Posterior cingulate gyrus (tissue), 11 donors: ENCODE measurements at regions of chrX and their contacts with region 1.

Region 1: DNA sequence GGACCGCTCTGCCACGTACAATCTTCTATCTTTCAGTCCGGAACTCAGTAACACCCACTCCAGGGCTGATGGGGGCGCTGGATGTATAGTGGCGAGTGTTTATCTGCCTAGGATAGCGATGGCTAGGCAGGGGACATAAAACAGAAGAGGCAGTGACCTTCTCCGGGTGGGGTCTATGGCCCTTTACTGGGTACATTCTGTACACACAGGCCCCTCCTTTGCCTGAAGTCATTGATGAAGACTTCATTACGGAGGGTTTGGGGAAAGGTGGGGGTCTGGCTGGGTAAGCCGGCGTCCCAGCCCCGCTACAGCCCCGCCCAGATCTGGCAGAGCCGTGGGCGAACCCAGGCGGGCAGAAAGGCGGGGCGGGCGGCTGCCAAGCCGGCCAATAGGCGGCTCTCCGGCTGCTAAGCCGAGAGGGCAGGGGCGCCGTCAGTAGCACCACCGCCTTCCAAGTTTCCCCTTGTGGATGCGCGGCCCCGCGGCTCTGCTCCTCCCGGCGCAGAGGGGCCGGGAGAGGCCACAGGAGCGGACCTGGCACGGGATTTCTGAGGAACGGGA is at the start of gene CHST7:
- DNase-seq: peak; percentile 16 to 88 (median 40)

Region 2: GRCh38 chrX:46642145-46642544 is 68.7 kb after region 1 on chrX:
- intact Hi-C with region 1: loop called (anchors 10 kb)
- DNase-seq: no peak

Region 3: DNA sequence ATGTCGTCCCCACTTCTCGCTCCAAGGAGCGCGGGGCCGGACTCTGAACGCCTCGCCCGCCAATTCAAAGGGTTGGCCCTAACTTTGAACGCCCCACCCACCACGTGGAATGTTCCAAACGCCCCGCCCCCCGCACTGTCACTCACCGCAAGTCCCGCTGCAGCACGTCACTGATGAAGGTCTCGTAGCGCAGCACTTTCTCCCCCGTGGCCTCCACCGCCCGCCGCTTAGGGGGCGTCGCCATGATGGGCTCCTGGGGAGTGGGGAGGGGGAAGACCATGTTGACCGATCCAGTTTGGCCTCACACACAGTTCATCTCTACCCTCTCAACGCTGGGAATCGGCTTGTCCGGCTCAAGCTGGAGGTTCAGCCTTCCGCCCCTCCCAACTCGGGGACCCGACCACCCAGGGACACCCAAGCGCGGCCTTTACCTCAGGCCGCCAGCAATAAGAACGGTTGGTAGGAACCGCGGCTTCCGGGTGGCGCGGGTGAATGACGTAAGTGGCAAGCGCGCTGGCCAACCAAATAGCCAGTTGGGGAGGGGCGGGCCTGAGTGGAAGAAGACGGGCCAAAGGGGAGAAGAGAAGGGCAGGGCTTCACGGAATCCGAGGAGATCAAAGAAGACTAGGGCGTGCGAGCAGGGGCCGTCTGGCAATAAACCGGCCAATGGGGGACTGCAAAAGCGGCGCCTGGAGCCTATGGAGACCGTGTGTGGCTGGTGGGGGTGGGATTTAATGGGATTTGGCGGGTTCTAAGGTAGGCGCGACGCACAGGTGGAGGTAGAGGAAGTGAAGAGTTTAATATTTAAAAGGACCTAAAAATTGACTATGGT is 1085.5 kb after region 1 on chrX and contains the start of gene UXT:
- intact Hi-C with region 1: no loop called
- DNase-seq: peak; percentile 81 to 98 (median 86)